Gastrocnemius medialis (tissue), 4 donors: ENCODE measurements at regions of chr3 and their contacts with region 1.

Region 1: DNA sequence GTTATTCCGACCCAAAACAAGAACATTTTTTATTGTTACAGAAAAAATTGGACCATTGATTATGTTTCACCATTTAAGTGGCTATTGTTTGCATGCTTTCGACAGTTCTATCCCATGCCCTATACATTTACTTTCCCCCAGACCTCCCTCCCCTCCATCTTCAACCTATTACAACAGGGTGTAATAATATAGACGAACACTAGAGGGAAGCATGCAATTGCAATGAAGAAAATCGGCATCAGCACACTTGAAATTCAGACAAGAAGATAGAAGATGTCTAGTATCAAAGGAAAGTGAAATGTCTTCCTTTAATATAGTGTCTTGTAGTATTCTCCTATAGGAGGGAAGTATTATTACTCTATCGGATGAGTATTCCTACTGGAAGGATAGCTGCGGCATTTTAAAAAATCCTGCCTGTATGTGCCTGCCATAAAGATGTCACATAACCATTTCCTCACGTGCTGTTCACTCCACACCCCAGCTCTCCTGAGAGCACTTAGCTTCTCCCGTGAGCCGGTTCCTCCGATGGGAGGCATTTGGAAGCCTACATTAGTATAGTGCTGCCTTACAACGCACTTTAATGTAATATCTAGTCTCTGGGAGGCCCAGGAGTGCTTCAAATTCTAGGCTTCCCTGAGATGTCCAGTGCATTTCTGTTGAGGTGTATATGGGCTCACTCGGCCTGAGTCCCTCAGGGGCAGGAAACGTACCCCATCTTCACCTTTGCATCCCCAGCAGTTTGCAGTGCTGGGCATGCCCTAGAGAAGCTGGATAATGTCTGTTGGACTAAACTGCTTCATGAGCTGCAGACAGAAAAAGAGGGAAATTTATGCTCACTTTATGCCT is 17.8 kb upstream of the ERICH6 start:
- DNase-seq: no peak
- ATAC-seq: peak; percentile 86 to 87
- H3K4me3 ChIP-seq: no peak overlapping the region
- H3K27ac ChIP-seq: no peak overlapping the region
- H3K4me1 ChIP-seq: no peaks in the 10 kb centered on the region
- H3K27me3 ChIP-seq: no peaks in the 10 kb centered on the region
- CTCF ChIP-seq: peak; percentile 80 to 87 (median 82)
- POLR2A ChIP-seq: no peak

Region 2: GRCh38 chr3:150763122-150763841 is 41.8 kb after region 1 on chr3 and contains the start of gene SIAH2:
- in situ Hi-C with region 1: no loop called
- intact Hi-C with region 1: no loop called
- DNase-seq: peak; percentile 85 to 88
- ATAC-seq: peak; percentile 79 to 84
- H3K4me3 ChIP-seq: peak within 1 kb of the TSS; percentile 61 to 80 (median 65)
- H3K27ac ChIP-seq: peak within 1 kb of the TSS; percentile 92 to 99 (median 96)
- H3K4me1 ChIP-seq: peaks cover 28 to 33% of the 10 kb centered on the region in 2 donors
- H3K27me3 ChIP-seq: no peaks in the 10 kb centered on the region
- CTCF ChIP-seq: peak in 1 of 5 experiments; percentile 21
- POLR2A ChIP-seq: peak; percentile 87 to 98
- total RNA-seq, gene SIAH2: 10.9 to 25.6 (median 20.0) TPM

Region 3: DNA sequence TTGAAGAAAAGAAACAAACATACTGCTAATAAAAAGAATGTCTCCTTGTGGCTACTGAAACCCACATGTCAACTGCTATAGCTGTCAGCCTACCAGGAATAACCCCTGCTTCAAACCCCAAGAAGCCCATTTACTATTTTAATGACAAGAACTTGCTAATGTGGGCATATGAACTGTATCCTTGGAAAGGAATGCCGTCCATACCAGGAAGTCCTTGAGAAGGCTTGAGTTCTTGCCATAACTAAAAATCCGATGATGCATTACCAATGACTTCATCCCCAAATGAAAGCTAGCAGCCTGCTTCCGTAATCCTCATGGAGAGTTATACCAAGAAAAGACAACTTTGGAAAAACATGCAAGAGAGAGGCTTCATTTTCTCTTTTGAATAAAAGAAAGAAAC is 148.9 kb after region 1 on chr3:
- in situ Hi-C with region 1: loop called (anchors 5 to 10 kb)
- intact Hi-C with region 1: loop called (anchors 1 kb)
- DNase-seq: no peak
- ATAC-seq: no peak
- H3K4me3 ChIP-seq: no peak overlapping the region
- H3K27ac ChIP-seq: no peak overlapping the region
- H3K4me1 ChIP-seq: no peaks in the 10 kb centered on the region
- H3K27me3 ChIP-seq: no peaks in the 10 kb centered on the region
- CTCF ChIP-seq: no peak
- POLR2A ChIP-seq: no peak